ENCODE measurements at regions of chr17 and their contacts with region 1.

Region 1: DNA sequence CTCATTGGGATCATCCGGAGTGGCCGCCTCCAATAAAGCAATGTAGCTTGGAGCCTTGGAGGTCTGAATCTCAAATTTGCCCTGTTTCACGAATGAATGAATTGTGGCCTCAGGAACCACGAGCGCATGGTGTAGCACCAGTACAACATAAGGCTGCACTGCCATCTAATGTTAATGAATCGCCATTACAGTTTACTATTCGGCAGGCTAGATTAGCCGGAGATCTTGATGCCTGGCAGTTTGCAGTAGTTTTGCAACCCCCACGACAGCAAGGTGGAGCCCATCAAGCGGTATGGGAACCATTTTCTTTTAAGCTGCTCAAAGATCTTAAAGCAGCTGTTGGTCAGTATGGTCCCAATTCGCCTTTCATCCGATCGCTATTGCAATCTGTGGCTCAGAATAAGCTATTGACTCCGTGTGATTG is 18.8 kb downstream of the ALOX15B start:
- DNase-seq: peak; percentile 83
- ATAC-seq: peak; percentile 94
- H3K4me3 ChIP-seq: no peak overlapping the region
- H3K27ac ChIP-seq: no peak overlapping the region
- H3K4me1 ChIP-seq: peaks cover 0 to 20% of the 10 kb centered on the region in 2 experiments; a peak in 3 of 4 replicates
- H3K27me3 ChIP-seq: no peaks in the 10 kb centered on the region
- CTCF ChIP-seq: peak; percentile 65 to 89 (median 77)
- POLR2A ChIP-seq: no peak
- RAD21 ChIP-seq: peak; percentile 93

Region 2: DNA sequence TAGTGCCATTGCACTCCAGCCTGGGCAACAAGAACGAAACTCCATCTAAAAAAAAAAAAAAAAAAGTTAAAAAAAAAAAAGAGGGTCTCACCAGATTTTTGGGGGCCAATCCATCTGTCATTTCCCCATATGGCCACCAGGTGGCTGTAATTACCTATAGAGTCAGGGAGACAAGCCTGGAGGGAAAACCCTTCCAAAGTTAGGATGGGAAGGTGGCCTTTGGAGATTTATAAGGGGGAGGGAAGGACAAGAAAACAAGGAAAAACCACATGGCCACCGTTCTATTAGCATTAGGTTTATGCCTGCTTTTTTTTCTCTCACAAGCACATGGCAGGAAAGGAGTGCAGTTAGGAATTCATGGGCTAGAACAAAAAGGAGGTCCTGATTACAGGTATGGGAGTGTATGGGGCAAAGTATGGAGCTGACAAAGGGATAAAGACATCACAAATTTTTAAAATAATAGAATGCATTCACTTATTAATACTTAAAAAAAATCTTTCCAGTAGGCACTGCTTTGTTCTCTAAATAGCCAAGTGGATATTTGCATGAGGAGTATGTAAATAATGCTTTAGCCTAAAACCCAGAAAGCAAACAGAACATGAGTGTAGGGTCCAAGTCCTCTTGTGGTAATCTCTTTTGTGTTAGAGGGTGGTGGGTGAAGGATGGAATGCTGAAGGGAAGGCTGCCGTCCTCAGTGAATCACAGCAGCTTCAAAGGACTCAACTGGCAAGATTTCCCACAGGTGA is 194.8 kb before region 1 on chr17:
- CTCF ChIA-PET with region 1: interaction called, 6 read pairs
- POLR2A ChIA-PET with region 1: no interaction called
- RAD21 ChIA-PET with region 1: no interaction called
- intact Hi-C with region 1: loop called (anchors 2 kb)
- DNase-seq: no peak
- ATAC-seq: no peak
- H3K4me3 ChIP-seq: no peak overlapping the region
- H3K27ac ChIP-seq: no peak overlapping the region
- H3K4me1 ChIP-seq: peaks cover 6 to 24% of the 10 kb centered on the region in 2 experiments
- H3K27me3 ChIP-seq: no peaks in the 10 kb centered on the region
- CTCF ChIP-seq: peak; percentile 66 to 88 (median 74)
- POLR2A ChIP-seq: no peak
- RAD21 ChIP-seq: peak; percentile 89

Region 3: GRCh38 chr17:8041249-8041928 is 16.3 kb before region 1 on chr17:
- CTCF ChIA-PET with region 1: interaction called, 35 read pairs
- POLR2A ChIA-PET with region 1: no interaction called
- RAD21 ChIA-PET with region 1: no interaction called
- intact Hi-C with region 1: no loop called
- DNase-seq: peak; percentile 72
- ATAC-seq: peak; percentile 78
- H3K4me3 ChIP-seq: no peak overlapping the region
- H3K27ac ChIP-seq: no peak overlapping the region
- H3K4me1 ChIP-seq: peaks cover 0 to 6% of the 10 kb centered on the region in 2 experiments; a peak in 1 of 4 replicates
- H3K27me3 ChIP-seq: no peaks in the 10 kb centered on the region
- CTCF ChIP-seq: peak; percentile 56 to 96 (median 82)
- POLR2A ChIP-seq: no peak
- RAD21 ChIP-seq: peak; percentile 97

Region 4: GRCh38 chr17:8091033-8091687 is 33.5 kb after region 1 on chr17:
- CTCF ChIA-PET with region 1: interaction called, 12 read pairs
- POLR2A ChIA-PET with region 1: no interaction called
- RAD21 ChIA-PET with region 1: no interaction called
- intact Hi-C with region 1: no loop called
- DNase-seq: no peak
- ATAC-seq: no peak
- H3K4me3 ChIP-seq: no peak overlapping the region
- H3K27ac ChIP-seq: no peak overlapping the region
- H3K4me1 ChIP-seq: peaks cover 2 to 11% of the 10 kb centered on the region in 2 experiments; a peak in 2 of 4 replicates
- H3K27me3 ChIP-seq: no peaks in the 10 kb centered on the region
- CTCF ChIP-seq: no peak
- POLR2A ChIP-seq: no peak
- RAD21 ChIP-seq: no peak

Region 5: GRCh38 chr17:8131844-8132441 is 74.2 kb after region 1 on chr17:
- CTCF ChIA-PET with region 1: interaction called, 10 read pairs
- POLR2A ChIA-PET with region 1: no interaction called
- RAD21 ChIA-PET with region 1: no interaction called
- intact Hi-C with region 1: no loop called
- DNase-seq: no peak
- ATAC-seq: no peak
- H3K4me3 ChIP-seq: no peak overlapping the region
- H3K27ac ChIP-seq: no peak overlapping the region
- H3K4me1 ChIP-seq: peaks cover 28 to 61% of the 10 kb centered on the region in 2 experiments
- H3K27me3 ChIP-seq: no peaks in the 10 kb centered on the region
- CTCF ChIP-seq: no peak
- POLR2A ChIP-seq: no peak
- RAD21 ChIP-seq: no peak

Region 6: DNA sequence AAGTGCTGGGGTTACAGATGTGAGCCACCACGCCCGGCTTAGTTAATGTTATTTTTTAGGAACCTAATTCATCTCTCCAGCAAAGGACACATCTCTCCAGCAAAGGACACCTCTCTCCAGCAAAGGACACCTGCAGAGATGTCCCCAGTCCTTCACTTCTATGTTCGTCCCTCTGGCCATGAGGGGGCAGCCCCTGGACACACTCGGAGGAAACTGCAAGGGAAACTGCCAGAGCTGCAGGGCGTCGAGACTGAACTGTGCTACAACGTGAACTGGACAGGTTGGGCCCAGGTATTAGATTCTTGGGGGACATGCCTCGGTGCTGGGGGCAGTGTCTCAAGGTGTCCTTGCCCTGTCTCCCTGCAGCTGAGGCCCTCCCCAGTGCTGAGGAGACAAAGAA is 196.1 kb after region 1 on chr17:
- CTCF ChIA-PET with region 1: no interaction called
- POLR2A ChIA-PET with region 1: no interaction called
- RAD21 ChIA-PET with region 1: no interaction called
- intact Hi-C with region 1: no loop called
- DNase-seq: peak; percentile 13
- ATAC-seq: peak; percentile 24; the same call in 1 of the 2 replicates
- H3K4me3 ChIP-seq: no peak overlapping the region
- H3K27ac ChIP-seq: no peak overlapping the region
- H3K4me1 ChIP-seq: peaks cover 8 to 11% of the 10 kb centered on the region in 2 experiments; a peak in 3 of 4 replicates
- H3K27me3 ChIP-seq: no peaks in the 10 kb centered on the region
- CTCF ChIP-seq: peak in 2 of 3 experiments; percentile 27 to 40; a peak in 3 of 6 replicates
- POLR2A ChIP-seq: no peak
- RAD21 ChIP-seq: peak; percentile 44

Region 7: DNA sequence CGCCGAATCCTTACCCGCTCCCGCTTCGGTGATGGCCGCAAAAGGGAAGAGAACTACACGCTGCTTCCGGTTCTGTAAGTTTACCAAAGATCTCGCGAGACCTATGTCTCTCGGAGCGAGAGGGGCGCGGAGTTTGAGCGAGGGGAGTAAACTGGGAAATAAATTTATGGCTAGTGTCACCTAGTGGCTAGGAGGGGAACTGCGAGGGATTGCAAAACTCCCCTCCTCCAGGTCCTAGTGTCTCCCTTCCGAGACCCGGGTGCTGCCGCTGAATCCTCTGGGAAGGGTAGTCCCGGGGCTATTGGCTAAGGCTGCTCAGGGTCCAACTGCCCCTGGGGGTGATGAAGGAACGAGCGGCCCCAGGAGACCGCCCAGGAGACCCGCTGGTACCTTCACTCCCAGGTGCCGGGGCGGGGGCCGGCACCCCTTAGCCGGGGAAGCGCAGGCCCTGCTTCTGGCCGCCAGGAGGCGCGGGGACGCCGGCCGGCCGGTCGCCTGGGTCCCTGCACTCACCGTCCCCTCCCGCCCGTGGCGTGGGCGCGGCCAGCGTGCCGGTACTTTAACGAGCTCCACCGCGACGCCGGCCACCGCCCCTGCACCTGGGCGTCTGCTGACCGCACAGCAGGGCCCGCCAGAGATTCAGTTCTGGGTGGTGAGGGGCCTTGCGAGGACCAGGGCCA is 325.6 kb after region 1 on chr17 and contains the start of gene RPL26:
- CTCF ChIA-PET with region 1: interaction called, 4 read pairs
- POLR2A ChIA-PET with region 1: no interaction called
- RAD21 ChIA-PET with region 1: no interaction called
- intact Hi-C with region 1: loop called (anchors 5 kb)
- DNase-seq: peak; percentile 97
- ATAC-seq: peak; percentile 88
- H3K4me3 ChIP-seq: peak within 1 kb of the TSS; percentile 85 to 98
- H3K27ac ChIP-seq: peak within 1 kb of the TSS; percentile 96
- H3K4me1 ChIP-seq: peaks cover 20 to 44% of the 10 kb centered on the region in 2 experiments
- H3K27me3 ChIP-seq: no peaks in the 10 kb centered on the region
- CTCF ChIP-seq: peak; percentile 62 to 98 (median 96)
- POLR2A ChIP-seq: peak; percentile 86
- RAD21 ChIP-seq: peak; percentile 70
- total RNA-seq, gene RPL26: 2,603 TPM

Measured in HCT116 (cell line).